CD4-positive, alpha-beta T cell (primary cell): ENCODE measurements at regions of chr4 and their contacts with region 1.

Region 1: GRCh38 chr4:183398227-183399125 is 46.0 kb upstream of the CDKN2AIP start:
- DNase-seq: peak; percentile 35 to 82 (median 52)
- ATAC-seq: peak; percentile 90
- H3K4me3 ChIP-seq: peak overlapping the region; percentile 63
- H3K4me3 Mint-ChIP-seq: peak overlapping the region; percentile 90
- H3K27ac ChIP-seq: no peak overlapping the region
- H3K27ac Mint-ChIP-seq: no peak overlapping the region
- H3K4me1 ChIP-seq: peaks cover 18% of the 10 kb centered on the region
- H3K4me1 Mint-ChIP-seq: peaks cover 31% of the 10 kb centered on the region
- H3K27me3 ChIP-seq: peaks cover 0 to 4% of the 10 kb centered on the region in 2 experiments
- H3K27me3 Mint-ChIP-seq: peaks cover 22% of the 10 kb centered on the region
- CTCF ChIP-seq: peak; percentile 69

Region 2: GRCh38 chr4:183287677-183288076 is 110.8 kb before region 1 on chr4:
- CTCF ChIA-PET with region 1: no interaction called
- POLR2A ChIA-PET with region 1: no interaction called
- intact Hi-C with region 1: loop called in 1 of 2 experiments (anchors 10 kb)
- DNase-seq: no peak
- ATAC-seq: no peak
- H3K4me3 ChIP-seq: no peak overlapping the region
- H3K4me3 Mint-ChIP-seq: no peak overlapping the region
- H3K27ac ChIP-seq: no peak overlapping the region
- H3K27ac Mint-ChIP-seq: no peak overlapping the region
- H3K4me1 ChIP-seq: no peaks in the 10 kb centered on the region
- H3K4me1 Mint-ChIP-seq: no peaks in the 10 kb centered on the region
- H3K27me3 ChIP-seq: no peaks in the 10 kb centered on the region
- H3K27me3 Mint-ChIP-seq: peaks cover 6% of the 10 kb centered on the region
- CTCF ChIP-seq: no peak

Region 3: DNA sequence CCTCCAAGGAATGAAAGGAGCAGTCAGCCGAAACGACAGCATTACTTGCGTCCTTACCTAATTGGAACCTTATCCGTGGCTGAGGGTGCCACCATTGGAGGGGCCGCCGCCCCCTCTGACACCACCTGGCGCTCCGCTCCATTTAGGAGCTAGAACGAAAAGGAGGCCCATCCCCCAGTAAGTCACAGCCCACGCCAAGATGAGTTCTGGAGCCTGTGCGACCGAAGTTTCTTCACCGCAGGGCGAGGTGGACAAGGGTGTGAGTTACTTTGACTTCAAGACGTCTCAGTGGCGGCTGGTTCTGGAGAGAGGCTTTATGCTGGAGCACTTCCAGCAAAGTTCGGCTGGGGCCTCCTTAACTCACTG is 1076.6 kb after region 1 on chr4:
- CTCF ChIA-PET with region 1: no interaction called
- POLR2A ChIA-PET with region 1: no interaction called
- intact Hi-C with region 1: no loop called
- DNase-seq: peak in 13 of 14 experiments; percentile 16 to 72 (median 42)
- ATAC-seq: peak; percentile 24
- H3K4me3 ChIP-seq: peak overlapping the region; percentile 99
- H3K4me3 Mint-ChIP-seq: peak overlapping the region; percentile 98
- H3K27ac ChIP-seq: peak overlapping the region; percentile 87 to 95
- H3K27ac Mint-ChIP-seq: peak overlapping the region; percentile 98
- H3K4me1 ChIP-seq: peaks cover 46% of the 10 kb centered on the region
- H3K4me1 Mint-ChIP-seq: peaks cover 63% of the 10 kb centered on the region
- H3K27me3 ChIP-seq: no peaks in the 10 kb centered on the region
- H3K27me3 Mint-ChIP-seq: no peaks in the 10 kb centered on the region
- CTCF ChIP-seq: no peak